ENCODE measurements at regions of chr12 and their contacts with region 1.

Region 1: DNA sequence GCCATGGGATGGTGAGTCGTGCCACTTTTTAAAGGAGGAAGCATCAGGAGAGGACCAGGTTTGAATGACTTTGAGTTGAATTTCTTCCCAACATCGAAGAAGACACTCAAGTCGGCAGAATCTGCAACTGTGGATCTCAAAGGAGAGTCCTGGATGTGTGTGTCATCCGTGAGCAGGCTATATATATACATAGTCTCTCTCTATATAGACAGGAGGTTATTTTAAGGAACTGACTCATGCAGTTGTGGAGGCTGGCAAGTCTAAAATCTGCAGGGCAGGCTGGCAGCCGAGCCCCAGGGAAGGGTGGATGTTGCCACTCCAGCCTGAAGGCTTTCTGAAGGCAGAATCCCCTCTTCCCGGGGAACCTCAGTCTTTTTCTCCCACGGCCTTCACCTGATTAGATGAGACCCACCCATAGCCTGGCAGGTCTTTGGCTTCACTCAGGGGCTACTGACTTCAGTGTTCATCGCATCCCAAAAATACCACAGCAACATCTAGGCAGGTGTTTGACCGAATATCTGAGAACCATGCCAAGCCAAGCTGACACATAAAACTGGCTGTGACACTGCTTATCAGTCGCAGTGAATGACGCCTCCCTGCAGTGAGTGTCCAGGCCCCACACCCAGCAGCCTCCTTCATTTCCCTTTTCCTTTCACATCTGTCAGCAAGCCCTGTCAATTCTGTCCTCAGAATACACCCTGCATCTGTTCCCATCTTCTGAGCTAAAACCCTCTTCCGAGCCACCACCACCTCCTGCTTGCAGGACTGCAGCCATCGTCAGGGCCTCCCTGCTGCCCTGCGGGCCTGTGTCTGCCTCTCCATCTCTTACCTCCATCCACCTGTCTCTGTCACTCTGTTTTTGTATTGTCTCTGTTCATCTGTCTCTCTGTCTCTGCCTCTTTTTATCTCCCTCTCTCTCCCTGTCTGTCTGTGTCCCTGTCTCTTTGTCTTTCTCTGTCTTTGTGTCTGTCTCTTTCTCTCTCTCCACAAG is 54.0 kb downstream of the ZNF664 start:
- DNase-seq: no peak
- ATAC-seq: peak; percentile 84 to 86 (median 86)
- H3K4me3 ChIP-seq: no peak overlapping the region
- H3K27ac ChIP-seq: peak overlapping the region; percentile 68
- H3K4me1 ChIP-seq: peaks cover 30% of the 10 kb centered on the region
- H3K27me3 ChIP-seq: no peaks in the 10 kb centered on the region
- CTCF ChIP-seq: no peak

Region 2: DNA sequence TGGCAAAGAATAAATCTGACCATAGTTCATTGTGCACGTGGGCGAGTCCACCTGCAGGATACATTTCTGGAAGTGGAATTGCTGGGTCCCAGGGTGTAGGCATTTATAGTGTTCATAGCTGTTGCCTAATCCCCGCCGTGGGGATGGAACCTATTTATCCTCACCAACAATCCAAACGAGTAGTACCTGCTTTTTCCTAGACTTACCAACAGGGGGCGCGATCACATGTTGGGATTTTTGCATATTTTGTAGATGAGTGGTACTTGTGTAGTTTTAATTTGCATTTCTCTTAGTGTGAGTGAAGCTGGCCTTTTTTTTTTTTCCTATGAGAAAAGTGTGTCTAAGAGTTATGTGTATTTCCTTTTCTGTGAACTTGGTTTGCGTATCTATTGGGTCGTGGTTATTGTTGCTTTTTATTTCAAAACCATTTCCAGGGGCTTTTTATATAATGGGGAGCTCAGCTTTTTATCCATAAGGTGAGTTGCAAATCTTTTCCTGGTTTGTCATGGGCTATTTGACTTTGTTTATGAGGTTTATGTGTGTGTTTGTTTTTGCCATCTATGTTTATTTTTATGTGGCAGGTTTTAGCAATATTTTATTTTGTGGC is 121.6 kb before region 1 on chr12:
- intact Hi-C with region 1: loop called in 1 of 2 experiments (anchors 5 kb)
- DNase-seq: no peak
- ATAC-seq: peak in 2 of 4 donors; percentile 50 to 56
- H3K4me3 ChIP-seq: no peak overlapping the region
- H3K27ac ChIP-seq: no peak overlapping the region
- H3K4me1 ChIP-seq: no peaks in the 10 kb centered on the region
- H3K27me3 ChIP-seq: no peaks in the 10 kb centered on the region
- CTCF ChIP-seq: peak; percentile 68

Region 3: DNA sequence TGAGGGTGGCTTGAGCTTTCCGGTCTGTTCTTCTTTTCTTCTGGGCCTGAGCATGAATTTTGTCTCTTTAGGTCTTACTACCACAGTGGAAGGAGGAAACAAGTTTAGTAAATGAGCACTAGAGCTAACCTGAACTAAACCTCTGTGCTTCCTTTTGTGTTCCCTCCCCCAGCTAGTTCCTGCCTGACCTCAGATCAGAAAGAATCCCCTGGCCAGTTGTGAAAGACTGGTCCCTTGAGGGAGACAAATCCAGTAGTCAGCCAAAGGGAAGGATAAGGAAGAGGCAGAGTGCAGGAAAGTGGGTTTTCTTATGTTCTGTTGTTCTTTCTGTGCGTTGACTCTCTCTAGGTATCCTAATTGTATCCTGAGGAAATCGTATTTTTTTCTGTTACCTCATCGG is 36.5 kb before region 1 on chr12:
- intact Hi-C with region 1: loop called in 1 of 2 experiments (anchors 5 kb)
- DNase-seq: no peak
- ATAC-seq: peak in 2 of 4 donors; percentile 36 to 39
- H3K4me3 ChIP-seq: no peak overlapping the region
- H3K27ac ChIP-seq: no peak overlapping the region
- H3K4me1 ChIP-seq: peaks cover 23% of the 10 kb centered on the region
- H3K27me3 ChIP-seq: no peaks in the 10 kb centered on the region
- CTCF ChIP-seq: no peak

Region 4: DNA sequence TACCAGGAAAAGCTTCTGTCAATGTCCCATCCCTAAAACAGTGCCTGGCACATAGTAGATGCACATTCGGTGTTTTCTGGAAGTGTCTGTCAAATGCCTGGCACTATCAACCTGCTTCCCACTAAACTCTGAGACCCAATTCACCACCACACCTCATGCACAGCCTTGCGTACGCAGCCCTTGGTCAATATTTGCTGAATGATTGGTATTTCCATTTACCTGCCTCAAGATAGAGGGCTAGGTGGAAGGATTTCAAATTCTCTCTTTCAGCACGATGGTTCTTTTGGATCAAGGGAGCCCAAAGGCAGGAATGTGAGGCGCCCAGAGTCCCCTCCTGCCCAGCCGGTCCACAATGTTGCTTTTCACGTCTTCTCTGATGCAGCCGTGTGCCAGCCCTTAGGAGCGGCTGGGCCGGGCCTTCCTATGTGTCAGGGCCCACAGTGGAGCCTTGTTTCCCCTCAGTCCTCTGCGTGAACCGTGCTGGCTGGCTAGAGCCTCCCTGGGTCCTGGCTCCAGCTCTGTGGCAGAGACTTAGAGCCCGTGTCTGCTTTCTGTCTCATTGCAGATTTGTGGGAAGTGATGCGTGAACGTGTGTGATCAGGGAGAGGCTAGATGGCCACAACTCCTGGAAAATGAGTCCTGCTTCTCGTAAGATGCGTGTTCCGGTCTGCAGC is 168.0 kb after region 1 on chr12:
- intact Hi-C with region 1: no loop called
- DNase-seq: no peak
- ATAC-seq: no peak
- H3K4me3 ChIP-seq: no peak overlapping the region
- H3K27ac ChIP-seq: no peak overlapping the region
- H3K4me1 ChIP-seq: no peaks in the 10 kb centered on the region
- H3K27me3 ChIP-seq: no peaks in the 10 kb centered on the region
- CTCF ChIP-seq: no peak

Measured in psoas muscle (tissue), 8 donors.